PC-9 (cell line): ENCODE measurements at regions of chr10 and their contacts with region 1.

Region 1: DNA sequence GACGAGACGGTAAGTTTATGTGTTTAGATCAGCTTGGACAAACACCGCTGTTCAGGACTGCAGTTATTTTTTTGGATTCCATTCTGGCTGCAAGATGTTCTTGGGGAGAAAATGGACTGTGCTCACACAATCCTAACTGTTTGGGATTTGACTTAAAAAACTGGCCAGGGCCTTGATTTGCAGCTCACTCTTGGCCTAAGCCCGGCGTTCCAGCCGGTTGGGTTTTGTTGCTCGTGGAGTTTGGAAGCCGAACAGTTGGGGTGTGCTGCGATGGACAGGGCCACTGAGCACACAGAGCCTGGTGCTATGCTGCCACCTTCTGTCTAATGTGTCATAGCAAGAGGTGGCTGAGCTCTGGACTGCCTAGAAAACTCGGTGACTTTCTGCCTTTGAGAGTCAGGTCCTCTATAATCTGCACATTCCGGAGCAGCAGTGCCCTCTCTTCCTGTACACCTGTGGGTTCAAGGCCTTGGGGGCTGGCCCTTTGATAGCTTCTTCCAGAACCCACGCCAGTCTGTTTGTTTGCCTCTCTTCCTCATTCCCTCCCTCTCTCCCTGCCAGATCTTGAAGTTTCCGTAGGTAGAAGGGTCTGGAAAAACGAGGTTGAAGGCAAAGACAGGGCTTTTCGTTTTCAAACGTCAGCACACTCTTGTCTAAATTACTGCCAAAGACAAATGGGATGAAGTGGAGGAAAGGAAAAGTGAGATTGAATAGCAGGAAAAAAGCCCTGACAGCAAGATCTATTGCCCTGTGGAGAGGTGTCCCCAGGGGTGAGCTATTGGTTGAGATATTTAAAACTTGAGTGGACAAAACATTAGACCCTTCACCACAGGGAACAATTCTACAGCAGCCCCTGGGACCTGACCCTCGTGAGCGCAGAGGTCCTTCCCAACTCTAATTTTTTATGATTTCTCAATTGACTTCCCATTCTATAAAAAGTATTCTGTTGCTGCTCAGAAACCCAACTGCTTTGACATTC is 167.5 kb upstream of the HABP2 start:
- DNase-seq: peak; percentile 50 to 61
- H3K4me3 ChIP-seq: no peak overlapping the region
- H3K27ac ChIP-seq: no peak overlapping the region
- H3K4me1 ChIP-seq: 0 out of 2 replicates have a peak, but pooled peaks cover 14% of the 10 kb centered on the region
- H3K27me3 ChIP-seq: no peaks in the 10 kb centered on the region
- CTCF ChIP-seq: peak; percentile 78

Region 2: DNA sequence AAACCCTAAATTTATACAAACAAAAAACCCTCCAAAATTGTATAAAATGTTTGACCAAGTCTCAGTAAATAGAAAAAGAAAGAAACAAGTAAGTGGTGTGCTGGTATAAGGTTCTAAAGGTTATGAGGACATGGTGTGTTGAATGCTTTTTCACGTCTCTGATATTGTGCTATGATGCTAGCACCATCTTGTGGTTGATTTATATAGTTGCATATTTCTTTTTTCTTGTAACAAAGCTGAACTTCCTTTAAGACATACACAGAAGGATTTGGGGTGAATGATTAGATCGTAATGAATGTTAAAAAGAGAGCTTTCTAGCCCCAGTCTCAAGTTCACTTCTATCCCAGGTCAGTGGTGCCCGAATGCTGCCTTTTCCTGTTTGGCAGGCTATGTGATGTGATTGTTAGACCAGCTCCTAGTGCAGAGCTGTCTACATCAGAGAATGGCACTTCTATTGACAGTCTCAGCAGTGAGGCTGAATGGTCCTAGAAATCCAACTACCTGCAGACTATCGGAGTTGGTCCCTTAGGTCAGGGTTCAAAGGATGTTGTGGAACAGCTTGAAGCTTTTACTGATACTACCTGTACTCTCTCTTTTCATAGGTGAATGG is 913.3 kb before region 1 on chr10:
- CTCF ChIA-PET with region 1: no interaction called
- POLR2A ChIA-PET with region 1: no interaction called
- intact Hi-C with region 1: loop called (anchors 1 kb)
- DNase-seq: peak in 1 of 2 experiments; percentile 45
- H3K4me3 ChIP-seq: no peak overlapping the region
- H3K27ac ChIP-seq: no peak overlapping the region
- H3K4me1 ChIP-seq: no peaks in the 10 kb centered on the region
- H3K27me3 ChIP-seq: no peaks in the 10 kb centered on the region
- CTCF ChIP-seq: peak; percentile 68

Region 3: DNA sequence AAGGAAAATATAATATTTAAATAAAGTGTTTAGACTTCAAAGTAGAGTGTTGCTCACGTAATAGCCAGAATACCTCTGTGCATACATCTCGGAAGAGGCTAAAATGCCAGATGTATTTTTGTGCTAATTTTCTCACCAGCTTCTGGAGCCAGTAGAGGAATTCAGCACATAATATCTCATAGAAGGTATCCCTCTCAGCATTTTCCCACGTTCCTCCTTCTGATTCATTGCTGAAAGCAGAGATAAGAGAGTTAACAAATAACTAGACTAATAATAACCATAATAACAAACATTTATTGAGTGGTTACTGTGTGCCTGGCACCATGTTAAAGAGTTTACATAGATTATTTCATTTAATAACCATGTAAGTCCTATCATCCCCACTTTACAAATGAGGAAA is 814.7 kb before region 1 on chr10:
- CTCF ChIA-PET with region 1: no interaction called
- POLR2A ChIA-PET with region 1: no interaction called
- intact Hi-C with region 1: loop called (anchors 5 kb)
- DNase-seq: no peak
- H3K4me3 ChIP-seq: no peak overlapping the region
- H3K27ac ChIP-seq: no peak overlapping the region
- H3K4me1 ChIP-seq: no peaks in the 10 kb centered on the region
- H3K27me3 ChIP-seq: no peaks in the 10 kb centered on the region
- CTCF ChIP-seq: no peak

Region 4: GRCh38 chr10:113126229-113127201 is 258.8 kb before region 1 on chr10:
- CTCF ChIA-PET with region 1: no interaction called
- POLR2A ChIA-PET with region 1: no interaction called
- intact Hi-C with region 1: loop called (anchors 2 kb)
- DNase-seq: peak in 1 of 2 experiments; percentile 63
- H3K4me3 ChIP-seq: peak overlapping the region; percentile 51; the same call in 1 of the 2 replicates
- H3K27ac ChIP-seq: no peak overlapping the region
- H3K4me1 ChIP-seq: peaks cover 19% of the 10 kb centered on the region
- H3K27me3 ChIP-seq: no peaks in the 10 kb centered on the region
- CTCF ChIP-seq: peak; percentile 42; the same call in 1 of the 2 replicates

Region 5: GRCh38 chr10:113216102-113216501 is 169.2 kb before region 1 on chr10:
- CTCF ChIA-PET with region 1: no interaction called
- POLR2A ChIA-PET with region 1: no interaction called
- intact Hi-C with region 1: loop called (anchors 2 kb)
- DNase-seq: no peak
- H3K4me3 ChIP-seq: no peak overlapping the region
- H3K27ac ChIP-seq: no peak overlapping the region
- H3K4me1 ChIP-seq: no peaks in the 10 kb centered on the region
- H3K27me3 ChIP-seq: no peaks in the 10 kb centered on the region
- CTCF ChIP-seq: peak; percentile 42

Region 6: GRCh38 chr10:113297226-113297625 is 88.1 kb before region 1 on chr10:
- CTCF ChIA-PET with region 1: no interaction called
- POLR2A ChIA-PET with region 1: no interaction called
- intact Hi-C with region 1: loop called (anchors 5 kb)
- DNase-seq: peak; percentile 58 to 95
- H3K4me3 ChIP-seq: no peak overlapping the region
- H3K27ac ChIP-seq: peak overlapping the region; percentile 53
- H3K4me1 ChIP-seq: peaks cover 31% of the 10 kb centered on the region
- H3K27me3 ChIP-seq: no peaks in the 10 kb centered on the region
- CTCF ChIP-seq: no peak; the same call in 1 of the 2 replicates

Region 7: DNA sequence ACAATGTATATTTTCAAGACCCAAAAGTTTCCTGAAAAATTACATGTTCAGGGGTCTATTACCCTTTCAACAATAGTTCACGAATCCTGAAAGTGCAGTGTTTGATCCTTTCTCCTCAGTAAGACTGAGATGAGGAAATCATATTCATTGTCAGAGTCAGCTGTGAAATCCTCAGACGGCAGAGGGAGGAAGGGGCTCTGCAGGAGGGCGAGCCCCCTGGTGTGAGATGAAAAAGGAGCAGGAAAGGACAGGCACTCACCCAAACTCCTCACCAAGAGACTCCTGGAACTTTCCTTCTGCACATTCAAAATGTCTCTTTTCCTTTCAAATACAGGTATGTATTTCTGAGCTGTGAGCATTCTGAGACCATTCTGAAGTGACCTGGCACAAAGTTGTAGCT is 17.3 kb after region 1 on chr10:
- CTCF ChIA-PET with region 1: interaction called, 10 read pairs
- POLR2A ChIA-PET with region 1: no interaction called
- intact Hi-C with region 1: no loop called
- DNase-seq: no peak
- H3K4me3 ChIP-seq: no peak overlapping the region
- H3K27ac ChIP-seq: no peak overlapping the region
- H3K4me1 ChIP-seq: no peaks in the 10 kb centered on the region
- H3K27me3 ChIP-seq: no peaks in the 10 kb centered on the region
- CTCF ChIP-seq: no peak